Activated CD4-positive, alpha-beta memory T cell treated with anti-CD3 and anti-CD28 coated beads for 36 hours (primary cell): ENCODE measurements at regions of chr2 and their contacts with region 1.

Region 1: DNA sequence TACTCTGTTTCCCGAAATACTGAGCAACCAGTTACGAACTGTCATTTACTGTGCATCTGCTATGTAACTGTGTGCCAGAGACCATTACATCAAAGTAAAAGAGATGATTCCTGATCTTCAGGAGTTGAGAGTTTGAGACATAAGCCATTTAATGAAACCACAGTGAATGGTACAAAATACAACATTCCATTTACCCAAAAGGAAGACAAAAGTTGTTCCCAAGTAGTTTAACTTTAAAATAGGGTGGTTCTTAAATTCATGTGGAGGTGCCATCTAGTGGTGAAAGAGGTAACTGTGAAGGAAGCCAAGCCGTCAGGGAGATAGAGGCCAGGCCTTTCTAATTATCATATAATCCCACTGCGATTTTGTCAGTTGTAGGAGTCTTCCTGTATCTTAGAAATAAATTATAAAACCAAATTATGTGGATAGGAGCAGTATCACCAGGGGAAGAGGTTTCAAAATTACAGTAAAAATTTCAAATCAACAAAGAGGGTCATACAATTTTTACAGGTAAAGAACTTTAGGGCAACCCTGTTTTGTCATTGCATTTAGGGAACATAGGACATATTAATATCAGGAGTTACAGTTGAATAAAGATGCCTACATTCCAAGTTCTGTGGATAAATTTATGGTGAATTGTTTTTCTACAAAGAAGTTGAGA is 67.7 kb downstream of the EPAS1 start:
- DNase-seq: peak; percentile 33
- H3K4me3 Mint-ChIP-seq: peak overlapping the region; percentile 21
- H3K27ac Mint-ChIP-seq: no peak overlapping the region
- H3K4me1 Mint-ChIP-seq: peaks cover 32% of the 10 kb centered on the region
- H3K27me3 Mint-ChIP-seq: no peaks in the 10 kb centered on the region

Region 2: DNA sequence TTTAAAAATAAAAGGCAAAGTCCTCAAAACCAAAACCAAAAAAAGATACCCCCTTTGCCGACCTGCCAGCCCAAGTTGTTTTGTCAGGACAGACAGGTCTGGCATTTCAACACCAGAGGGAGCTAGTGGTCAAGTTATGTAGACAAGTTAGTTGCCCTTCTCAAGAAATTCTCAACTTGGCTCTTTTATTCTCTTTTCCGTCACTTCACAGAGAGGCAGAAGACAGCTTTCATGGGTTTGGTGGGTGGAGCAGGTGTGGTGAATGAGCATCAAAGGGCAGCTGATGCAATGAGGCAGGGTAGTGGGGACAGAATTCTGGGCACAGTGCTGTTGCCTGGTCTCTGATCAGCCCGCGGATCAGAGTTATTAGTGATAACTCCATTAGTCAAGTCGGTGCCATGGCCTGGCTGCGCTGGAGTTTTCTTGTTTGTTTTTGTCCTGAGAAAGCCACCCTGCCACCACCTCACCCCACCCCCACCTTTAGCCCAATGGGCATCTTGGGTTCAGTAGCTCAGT is 371.4 kb before region 1 on chr2:
- CTCF ChIA-PET with region 1: interaction called, 9 read pairs
- POLR2A ChIA-PET with region 1: no interaction called
- intact Hi-C with region 1: loop called (anchors 1 kb)
- DNase-seq: peak; percentile 66
- H3K4me3 Mint-ChIP-seq: no peak overlapping the region
- H3K27ac Mint-ChIP-seq: no peak overlapping the region
- H3K4me1 Mint-ChIP-seq: peaks cover 5% of the 10 kb centered on the region
- H3K27me3 Mint-ChIP-seq: no peaks in the 10 kb centered on the region

Region 3: GRCh38 chr2:46062637-46063412 is 302.1 kb before region 1 on chr2:
- CTCF ChIA-PET with region 1: interaction called, 27 read pairs
- POLR2A ChIA-PET with region 1: no interaction called
- intact Hi-C with region 1: loop called (anchors 1 kb)
- DNase-seq: peak; percentile 80
- H3K4me3 Mint-ChIP-seq: no peak overlapping the region
- H3K27ac Mint-ChIP-seq: no peak overlapping the region
- H3K4me1 Mint-ChIP-seq: peaks cover 21% of the 10 kb centered on the region
- H3K27me3 Mint-ChIP-seq: no peaks in the 10 kb centered on the region

Region 4: GRCh38 chr2:46216257-46216656 is 148.7 kb before region 1 on chr2:
- CTCF ChIA-PET with region 1: no interaction called
- POLR2A ChIA-PET with region 1: no interaction called
- intact Hi-C with region 1: no loop called
- DNase-seq: no peak
- H3K4me3 Mint-ChIP-seq: no peak overlapping the region
- H3K27ac Mint-ChIP-seq: no peak overlapping the region
- H3K4me1 Mint-ChIP-seq: no peaks in the 10 kb centered on the region
- H3K27me3 Mint-ChIP-seq: peaks cover 8% of the 10 kb centered on the region

Region 5: DNA sequence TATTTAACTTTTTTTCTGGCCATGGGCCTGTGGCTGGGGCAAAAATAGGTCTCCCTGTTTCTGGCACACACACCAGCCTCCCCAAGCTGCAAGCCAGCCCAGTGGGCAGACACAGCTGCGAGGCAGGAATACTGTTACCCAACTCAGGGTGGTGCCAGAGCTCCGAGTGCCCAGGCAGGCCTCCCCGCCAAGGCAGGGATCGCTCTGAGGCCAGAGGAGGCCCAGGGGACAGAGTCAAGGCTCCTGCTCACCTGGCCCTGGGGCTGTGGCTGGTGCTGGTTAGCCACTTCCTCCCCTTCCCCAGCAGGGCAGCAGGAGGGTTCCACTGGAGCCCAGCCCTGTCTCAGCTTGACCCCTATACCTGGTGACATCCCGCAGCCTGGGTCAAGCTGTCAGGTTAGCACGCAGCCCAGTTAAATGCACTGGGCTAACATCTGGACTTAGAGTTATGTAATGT is 134.8 kb before region 1 on chr2:
- CTCF ChIA-PET with region 1: interaction called, 9 read pairs
- POLR2A ChIA-PET with region 1: no interaction called
- intact Hi-C with region 1: loop called (anchors 2 kb)
- DNase-seq: peak; percentile 50
- H3K4me3 Mint-ChIP-seq: peak overlapping the region; percentile 16
- H3K27ac Mint-ChIP-seq: peak overlapping the region; percentile 92
- H3K4me1 Mint-ChIP-seq: peaks cover 51% of the 10 kb centered on the region
- H3K27me3 Mint-ChIP-seq: no peaks in the 10 kb centered on the region

Region 6: GRCh38 chr2:46329803-46330775 is 34.8 kb before region 1 on chr2:
- CTCF ChIA-PET with region 1: no interaction called
- POLR2A ChIA-PET with region 1: no interaction called
- intact Hi-C with region 1: loop called (anchors 1 kb)
- DNase-seq: no peak
- H3K4me3 Mint-ChIP-seq: no peak overlapping the region
- H3K27ac Mint-ChIP-seq: no peak overlapping the region
- H3K4me1 Mint-ChIP-seq: peaks cover 13% of the 10 kb centered on the region
- H3K27me3 Mint-ChIP-seq: no peaks in the 10 kb centered on the region

Region 7: DNA sequence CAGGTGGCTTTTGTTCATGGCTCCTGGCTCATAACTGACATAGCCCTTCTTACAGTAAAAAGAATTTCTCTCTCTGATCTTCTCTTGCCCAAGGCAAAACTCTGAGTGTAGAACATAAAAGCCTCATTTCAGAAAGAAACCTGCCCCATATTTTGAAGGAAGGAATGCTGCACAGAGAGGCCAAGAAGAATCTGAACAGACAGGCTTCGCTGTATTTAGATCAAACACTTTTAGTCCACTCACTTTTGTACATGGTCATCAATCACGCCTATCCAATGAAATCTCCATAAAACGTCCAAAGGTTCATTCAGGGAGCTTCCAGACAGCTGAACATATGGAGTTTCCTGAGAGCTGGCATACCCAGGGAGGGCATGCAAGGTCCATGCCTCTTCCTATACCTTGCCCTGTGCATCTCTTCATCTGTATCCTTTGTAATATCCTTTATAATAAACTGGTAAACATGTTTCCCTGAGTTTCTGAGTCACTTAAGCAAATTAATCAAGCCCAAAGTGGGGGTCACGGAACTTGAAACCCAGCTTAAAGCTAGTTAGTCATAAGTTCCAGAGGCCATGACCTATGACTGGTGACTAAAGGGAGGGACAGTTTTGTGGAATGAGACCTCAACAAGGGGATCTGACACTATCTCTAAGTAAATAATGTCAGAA is 51.9 kb after region 1 on chr2:
- CTCF ChIA-PET with region 1: no interaction called
- POLR2A ChIA-PET with region 1: no interaction called
- intact Hi-C with region 1: no loop called
- DNase-seq: no peak
- H3K4me3 Mint-ChIP-seq: no peak overlapping the region
- H3K27ac Mint-ChIP-seq: no peak overlapping the region
- H3K4me1 Mint-ChIP-seq: peaks cover 3% of the 10 kb centered on the region
- H3K27me3 Mint-ChIP-seq: peaks cover 4% of the 10 kb centered on the region